ENCODE measurements at regions of chr1 and their contacts with region 1.

Region 1: GRCh38 chr1:225777583-225778336 is at the start of gene SRP9:
- DNase-seq: peak; percentile 95 to 100 (median 99)
- ATAC-seq: peak; percentile 92
- H3K4me3 Mint-ChIP-seq: no peak within 1 kb of the TSS
- H3K27ac Mint-ChIP-seq: no peak within 1 kb of the TSS
- H3K4me1 Mint-ChIP-seq: peaks cover 23 to 58% (median 49%) of the 10 kb centered on the region in 4 donors
- H3K27me3 Mint-ChIP-seq: no peaks in the 10 kb centered on the region
- polyA plus RNA-seq, gene SRP9: 273 to 350 (median 288) TPM

Region 2: GRCh38 chr1:225467193-225468020 is 310.4 kb before region 1 on chr1:
- POLR2A ChIA-PET with region 1: interaction called, 33 read pairs
- DNase-seq: peak; percentile 58 to 90 (median 82)
- ATAC-seq: peak; percentile 85 to 86
- H3K4me3 Mint-ChIP-seq: peak overlapping the region; percentile 89 to 97 (median 92)
- H3K27ac Mint-ChIP-seq: peak overlapping the region; percentile 92 to 99 (median 98)
- H3K4me1 Mint-ChIP-seq: peaks cover 19 to 56% (median 50%) of the 10 kb centered on the region in 4 donors
- H3K27me3 Mint-ChIP-seq: no peaks in the 10 kb centered on the region

Region 3: DNA sequence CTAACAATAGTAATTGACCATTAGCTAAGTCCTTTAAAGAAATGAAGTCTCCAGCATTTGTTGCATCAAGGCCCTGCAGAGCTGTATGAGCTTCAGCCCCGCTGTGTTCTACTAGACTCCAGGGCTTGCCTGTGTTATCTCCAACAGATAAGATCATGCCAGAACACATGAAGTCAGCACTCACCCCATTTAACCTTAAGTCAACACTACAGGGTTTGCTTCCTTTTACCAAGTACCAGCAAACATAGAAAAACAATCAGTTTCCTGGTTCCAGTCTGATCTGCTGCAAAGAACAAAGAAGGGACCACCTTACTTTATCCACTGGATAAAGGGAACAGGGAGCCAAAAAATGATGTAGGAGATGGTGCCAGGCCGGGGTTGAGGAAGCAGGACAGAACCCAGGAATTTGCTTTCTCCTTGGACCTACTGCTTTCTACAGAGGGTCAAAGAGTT is 83.6 kb before region 1 on chr1:
- POLR2A ChIA-PET with region 1: no interaction called
- DNase-seq: no peak
- ATAC-seq: no peak
- H3K4me3 Mint-ChIP-seq: no peak overlapping the region
- H3K27ac Mint-ChIP-seq: no peak overlapping the region
- H3K4me1 Mint-ChIP-seq: no peaks in the 10 kb centered on the region
- H3K27me3 Mint-ChIP-seq: peaks cover 0 to 3% (median 2%) of the 10 kb centered on the region in 5 donors

Region 4: DNA sequence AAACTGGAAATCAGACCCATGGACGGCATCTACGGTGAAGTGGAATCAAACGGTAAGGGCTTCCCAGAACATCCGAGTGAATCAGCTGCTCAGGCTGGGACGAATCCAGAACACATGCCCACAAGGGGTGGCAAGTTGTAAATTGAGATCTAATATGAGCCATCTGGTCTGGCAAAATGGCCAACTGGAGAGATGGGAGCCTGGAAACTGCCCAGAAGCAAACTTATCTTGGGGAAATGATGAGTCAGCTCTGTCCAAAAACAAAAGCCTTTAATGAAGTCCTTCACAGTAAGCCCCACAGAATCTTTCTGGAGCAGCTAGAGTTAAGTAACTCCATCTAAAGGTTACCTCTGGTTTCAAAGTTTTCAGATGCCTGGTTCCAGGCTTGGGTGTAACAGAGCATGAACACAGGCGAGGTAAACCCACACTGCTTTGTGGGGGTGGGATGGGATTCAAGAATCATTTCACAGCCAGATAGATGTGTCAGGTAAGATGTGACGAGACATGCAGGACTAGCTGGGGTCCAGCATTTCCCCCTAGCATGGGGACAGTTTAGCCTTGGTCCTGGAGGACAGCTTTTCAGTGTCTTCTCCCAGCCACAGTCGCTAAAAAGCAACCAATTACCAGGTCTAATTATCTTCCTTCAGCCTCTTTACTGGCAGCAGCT is 10.7 kb before region 1 on chr1:
- POLR2A ChIA-PET with region 1: interaction called, 27 read pairs
- DNase-seq: no peak
- ATAC-seq: no peak
- H3K4me3 Mint-ChIP-seq: no peak overlapping the region
- H3K27ac Mint-ChIP-seq: peak overlapping the region in 2 of 10 donors; percentile 14 to 72
- H3K4me1 Mint-ChIP-seq: peaks cover 0 to 8% (median 5%) of the 10 kb centered on the region in 4 donors
- H3K27me3 Mint-ChIP-seq: peaks cover 0 to 2% (median 0%) of the 10 kb centered on the region in 5 donors

Region 5: DNA sequence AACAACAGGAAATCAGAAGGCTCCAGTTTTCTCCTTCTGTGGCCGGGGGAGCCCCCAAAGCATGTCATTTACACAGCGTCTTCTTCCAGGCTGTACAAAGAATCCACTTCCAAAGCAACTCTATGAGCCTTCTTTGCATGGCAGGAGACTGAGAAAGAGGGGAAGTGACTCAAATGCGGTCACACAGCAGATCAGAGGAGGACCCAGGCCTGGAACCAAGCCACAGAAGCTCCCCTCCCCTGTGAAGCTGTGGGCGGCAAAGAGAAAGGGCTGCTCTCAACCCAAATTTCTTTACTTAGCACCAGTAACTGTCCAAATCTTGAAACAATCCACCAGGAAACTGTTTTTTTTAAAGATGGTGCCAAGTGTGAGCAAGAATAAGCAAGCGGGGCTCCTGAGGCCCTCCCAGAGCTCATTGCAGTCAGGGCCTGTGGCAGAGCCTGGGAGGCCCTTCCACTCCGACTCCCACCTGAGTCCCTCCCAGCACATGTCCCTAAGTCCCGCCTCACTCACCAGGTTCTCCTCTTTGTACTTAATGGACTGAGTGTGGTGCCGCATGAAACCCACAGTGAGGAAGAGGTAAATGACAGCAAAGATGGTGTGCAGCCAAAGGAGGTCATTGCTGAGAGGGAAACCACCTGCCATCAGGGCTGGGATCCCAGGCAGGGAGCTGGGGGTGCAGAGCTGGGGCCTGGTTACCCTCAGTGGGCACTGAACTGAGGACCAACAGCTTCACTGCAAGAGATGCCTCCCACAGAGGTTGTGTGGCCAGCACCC is 88.5 kb after region 1 on chr1:
- POLR2A ChIA-PET with region 1: interaction called, 15 read pairs
- DNase-seq: peak; percentile 36 to 87 (median 76)
- ATAC-seq: peak; percentile 89 to 94
- H3K4me3 Mint-ChIP-seq: peak overlapping the region; percentile 53 to 82 (median 74)
- H3K27ac Mint-ChIP-seq: peak overlapping the region; percentile 82 to 95 (median 90)
- H3K4me1 Mint-ChIP-seq: peaks cover 22 to 56% (median 44%) of the 10 kb centered on the region in 4 donors
- H3K27me3 Mint-ChIP-seq: no peaks in the 10 kb centered on the region

Region 6: GRCh38 chr1:225911191-225912130 is 133.7 kb after region 1 on chr1:
- POLR2A ChIA-PET with region 1: interaction called, 23 read pairs
- DNase-seq: peak; percentile 51 to 85 (median 76)
- ATAC-seq: peak; percentile 94 to 96
- H3K4me3 Mint-ChIP-seq: peak overlapping the region in 5 of 10 donors; percentile 14 to 62 (median 25)
- H3K27ac Mint-ChIP-seq: peak overlapping the region in 9 of 10 donors; percentile 19 to 84 (median 73)
- H3K4me1 Mint-ChIP-seq: peaks cover 25 to 56% (median 39%) of the 10 kb centered on the region in 4 donors
- H3K27me3 Mint-ChIP-seq: no peaks in the 10 kb centered on the region

Region 7: GRCh38 chr1:226062558-226063223 is 284.9 kb after region 1 on chr1 and contains the start of gene H3-3A:
- POLR2A ChIA-PET with region 1: interaction called, 26 read pairs
- DNase-seq: peak; percentile 95 to 99 (median 98)
- ATAC-seq: peak; percentile 77 to 81
- H3K4me3 Mint-ChIP-seq: peak within 1 kb of the TSS; percentile 98 to 100 (median 100)
- H3K27ac Mint-ChIP-seq: peak within 1 kb of the TSS; percentile 98 to 100 (median 99)
- H3K4me1 Mint-ChIP-seq: peaks cover 29 to 69% (median 53%) of the 10 kb centered on the region in 4 donors
- H3K27me3 Mint-ChIP-seq: no peaks in the 10 kb centered on the region
- polyA plus RNA-seq, gene H3-3A: 736 to 904 (median 888) TPM